ENCODE measurements at regions of chr13 and their contacts with region 1.

Region 1: DNA sequence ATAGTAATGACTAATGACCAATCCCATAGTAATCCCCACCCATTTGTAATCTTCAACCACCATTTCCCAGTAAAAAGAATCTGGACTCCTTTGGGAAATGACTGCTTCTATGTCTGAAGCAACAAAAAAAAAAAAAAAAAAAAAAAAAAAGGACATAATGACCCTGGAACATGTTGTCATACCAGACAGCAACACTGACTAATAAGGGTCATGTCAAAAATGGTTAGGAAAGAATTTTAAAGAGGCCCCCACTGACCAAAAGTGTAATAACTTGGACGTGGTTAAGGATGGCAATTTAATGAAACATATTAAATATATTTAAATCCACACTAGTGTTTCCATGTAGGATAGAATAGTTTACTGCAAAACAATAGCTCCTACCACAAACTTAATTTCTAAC is 88.2 kb downstream of the TUBA3C start:
- DNase-seq: no peak
- ATAC-seq: no peak
- H3K4me3 ChIP-seq: no peak overlapping the region
- H3K27ac ChIP-seq: no peak overlapping the region
- H3K4me1 ChIP-seq: no peaks in the 10 kb centered on the region
- H3K27me3 ChIP-seq: peaks cover 0 to 14% (median 0%) of the 10 kb centered on the region in 7 donors
- CTCF ChIP-seq: no peak

Region 2: DNA sequence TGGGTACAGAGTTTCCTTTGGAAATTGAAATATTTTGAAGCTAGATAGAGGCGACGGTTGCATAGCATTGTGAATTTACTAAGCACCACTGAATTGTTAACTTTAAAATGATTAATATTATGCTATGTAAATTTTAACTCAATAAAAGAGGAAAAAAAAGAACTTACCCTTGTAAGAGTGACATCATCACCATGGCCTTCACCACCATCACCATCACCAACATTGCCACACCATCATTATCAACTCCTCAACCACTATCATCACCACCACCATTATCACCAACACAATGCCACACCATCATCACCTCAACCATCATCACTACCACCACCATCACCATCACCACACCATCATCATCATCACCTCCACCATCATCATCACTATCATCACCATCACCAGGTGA is 25.7 kb before region 1 on chr13:
- intact Hi-C with region 1: loop called in 1 of 10 experiments (anchors 2 kb)
- DNase-seq: no peak
- ATAC-seq: no peak
- H3K4me3 ChIP-seq: no peak overlapping the region
- H3K27ac ChIP-seq: no peak overlapping the region
- H3K4me1 ChIP-seq: no peaks in the 10 kb centered on the region
- H3K27me3 ChIP-seq: no peaks in the 10 kb centered on the region
- CTCF ChIP-seq: no peak

Region 3: GRCh38 chr13:19185086-19185864 is 91.8 kb after region 1 on chr13:
- intact Hi-C with region 1: no loop called
- DNase-seq: no peak
- ATAC-seq: no peak
- H3K4me3 ChIP-seq: no peak overlapping the region
- H3K27ac ChIP-seq: no peak overlapping the region
- H3K4me1 ChIP-seq: no peaks in the 10 kb centered on the region
- H3K27me3 ChIP-seq: peaks cover 0 to 7% (median 0%) of the 10 kb centered on the region in 7 donors
- CTCF ChIP-seq: no peak

Measured in heart right ventricle (tissue), 16 donors.